ENCODE measurements at regions of chr10 and their contacts with region 1.

Region 1: GRCh38 chr10:95693668-95694534 is at the start of gene TCTN3:
- DNase-seq: peak; percentile 99
- H3K4me3 ChIP-seq: peak within 1 kb of the TSS; percentile 97
- H3K27ac ChIP-seq: peak within 1 kb of the TSS; percentile 72
- H3K27me3 ChIP-seq: no peaks in the 10 kb centered on the region
- CTCF ChIP-seq: peak; percentile 99
- polyA plus RNA-seq, gene TCTN3: 51.3 and 55.3 TPM in 2 replicates

Region 2: DNA sequence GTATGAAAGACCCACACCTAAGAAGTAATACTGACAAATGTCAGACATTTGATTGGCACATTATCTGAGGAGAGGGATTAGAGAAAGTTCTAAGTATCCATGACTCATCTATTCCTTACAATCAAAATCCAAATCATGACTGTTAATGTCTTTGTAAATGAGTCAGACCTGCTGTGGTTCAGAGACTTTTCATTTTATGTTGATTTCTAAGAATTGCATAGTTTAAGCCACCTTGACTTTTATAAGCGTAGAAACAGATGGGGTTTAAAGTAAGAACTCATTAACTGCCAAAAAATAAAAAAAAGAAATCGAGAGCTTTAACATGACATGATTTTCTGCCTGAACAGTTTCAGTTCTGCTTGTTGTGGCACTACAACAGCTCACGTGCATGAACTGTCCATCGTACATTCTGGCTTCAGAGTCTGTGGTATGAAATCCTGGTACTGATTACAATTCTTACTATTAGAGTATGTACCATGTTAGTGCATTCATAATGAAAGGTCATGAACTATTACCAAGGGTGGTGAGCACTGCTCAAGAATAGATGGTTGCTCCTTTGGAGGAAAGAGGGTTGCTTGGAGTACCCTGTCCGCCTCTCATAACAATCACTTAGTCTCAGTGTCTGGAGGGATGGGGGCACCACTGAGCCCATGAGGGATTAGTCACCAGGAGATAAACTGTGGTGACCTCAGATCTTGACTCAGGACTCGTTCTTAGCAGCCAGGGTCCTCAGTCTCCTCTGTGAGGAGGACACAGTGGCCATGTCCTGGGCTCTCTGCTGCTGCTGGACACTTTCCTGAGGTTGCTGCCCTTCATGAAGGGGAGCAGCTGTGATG is 457.6 kb before region 1 on chr10:
- CTCF ChIA-PET with region 1: no interaction called
- POLR2A ChIA-PET with region 1: no interaction called
- DNase-seq: no peak
- H3K4me3 ChIP-seq: no peak overlapping the region
- H3K27ac ChIP-seq: peak overlapping the region; percentile 77
- H3K27me3 ChIP-seq: no peaks in the 10 kb centered on the region
- CTCF ChIP-seq: no peak

Region 3: GRCh38 chr10:95656291-95657164 is 37.4 kb before region 1 on chr10 and contains the start of gene ALDH18A1:
- CTCF ChIA-PET with region 1: interaction called, 32 read pairs
- POLR2A ChIA-PET with region 1: interaction called, 5 read pairs
- DNase-seq: peak; percentile 82
- H3K4me3 ChIP-seq: peak within 1 kb of the TSS; percentile 95
- H3K27ac ChIP-seq: peak within 1 kb of the TSS; percentile 39
- H3K27me3 ChIP-seq: no peaks in the 10 kb centered on the region
- CTCF ChIP-seq: no peak
- polyA plus RNA-seq, gene ALDH18A1: 123 and 125 TPM in 2 replicates

Region 4: DNA sequence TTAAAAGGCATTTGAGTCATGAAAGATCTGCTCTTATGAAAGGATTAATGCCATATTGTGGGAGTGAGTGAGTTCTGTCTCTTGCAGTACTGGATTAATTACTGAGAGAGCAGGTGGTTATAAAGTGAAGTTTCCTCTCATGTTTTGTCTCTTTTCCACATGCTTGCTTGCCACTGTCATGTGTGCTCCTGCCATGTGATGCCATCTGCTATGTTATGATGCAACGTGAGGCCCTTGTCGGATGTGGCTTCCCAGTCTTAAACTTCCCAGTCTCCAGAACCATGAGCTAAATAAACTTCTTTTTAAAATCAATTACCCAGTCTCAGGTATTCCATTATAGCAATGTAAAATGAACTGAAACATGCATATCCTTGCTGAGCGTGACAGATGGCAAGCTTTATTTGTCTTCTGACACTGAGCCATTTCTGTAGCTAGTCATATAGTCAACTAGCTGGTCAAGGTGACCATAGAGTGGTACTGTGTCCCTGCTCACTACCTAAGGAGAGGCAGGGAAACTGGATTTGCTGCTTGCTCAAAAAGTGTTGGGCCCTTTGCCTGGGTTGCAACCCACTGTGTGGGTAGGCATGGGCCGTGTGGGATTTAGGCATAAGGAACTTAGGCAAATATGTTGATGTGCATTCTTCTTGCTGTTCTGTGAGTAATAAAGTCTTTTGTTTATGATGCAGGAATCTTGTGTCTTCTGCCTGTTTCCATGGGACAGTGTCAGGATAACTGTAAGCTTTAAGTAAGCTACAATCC is 22.7 kb after region 1 on chr10:
- CTCF ChIA-PET with region 1: interaction called, 46 read pairs
- POLR2A ChIA-PET with region 1: no interaction called
- DNase-seq: no peak
- H3K4me3 ChIP-seq: no peak overlapping the region
- H3K27ac ChIP-seq: no peak overlapping the region
- H3K27me3 ChIP-seq: no peaks in the 10 kb centered on the region
- CTCF ChIP-seq: no peak

Region 5: GRCh38 chr10:95783741-95784140 is 89.8 kb after region 1 on chr10:
- CTCF ChIA-PET with region 1: interaction called, 18 read pairs
- POLR2A ChIA-PET with region 1: no interaction called
- DNase-seq: no peak
- H3K4me3 ChIP-seq: no peak overlapping the region
- H3K27ac ChIP-seq: no peak overlapping the region
- H3K27me3 ChIP-seq: no peaks in the 10 kb centered on the region
- CTCF ChIP-seq: no peak

Region 6: GRCh38 chr10:95864906-95865813 is 171.3 kb after region 1 on chr10:
- CTCF ChIA-PET with region 1: interaction called, 238 read pairs
- POLR2A ChIA-PET with region 1: interaction called, 7 read pairs
- DNase-seq: peak; percentile 63
- H3K4me3 ChIP-seq: no peak overlapping the region
- H3K27ac ChIP-seq: peak overlapping the region; percentile 0
- H3K27me3 ChIP-seq: no peaks in the 10 kb centered on the region
- CTCF ChIP-seq: peak; percentile 87

Region 7: GRCh38 chr10:95907456-95908253 is 213.8 kb after region 1 on chr10 and contains the start of gene CC2D2B:
- CTCF ChIA-PET with region 1: interaction called, 48 read pairs
- POLR2A ChIA-PET with region 1: no interaction called
- DNase-seq: peak; percentile 46
- H3K4me3 ChIP-seq: peak within 1 kb of the TSS; percentile 82
- H3K27ac ChIP-seq: peak within 1 kb of the TSS; percentile 69
- H3K27me3 ChIP-seq: peaks cover 3% of the 10 kb centered on the region
- CTCF ChIP-seq: peak; percentile 22; the same call in 1 of the 2 replicates
- polyA plus RNA-seq, gene CC2D2B: not detected in 2 replicates

Region 8: DNA sequence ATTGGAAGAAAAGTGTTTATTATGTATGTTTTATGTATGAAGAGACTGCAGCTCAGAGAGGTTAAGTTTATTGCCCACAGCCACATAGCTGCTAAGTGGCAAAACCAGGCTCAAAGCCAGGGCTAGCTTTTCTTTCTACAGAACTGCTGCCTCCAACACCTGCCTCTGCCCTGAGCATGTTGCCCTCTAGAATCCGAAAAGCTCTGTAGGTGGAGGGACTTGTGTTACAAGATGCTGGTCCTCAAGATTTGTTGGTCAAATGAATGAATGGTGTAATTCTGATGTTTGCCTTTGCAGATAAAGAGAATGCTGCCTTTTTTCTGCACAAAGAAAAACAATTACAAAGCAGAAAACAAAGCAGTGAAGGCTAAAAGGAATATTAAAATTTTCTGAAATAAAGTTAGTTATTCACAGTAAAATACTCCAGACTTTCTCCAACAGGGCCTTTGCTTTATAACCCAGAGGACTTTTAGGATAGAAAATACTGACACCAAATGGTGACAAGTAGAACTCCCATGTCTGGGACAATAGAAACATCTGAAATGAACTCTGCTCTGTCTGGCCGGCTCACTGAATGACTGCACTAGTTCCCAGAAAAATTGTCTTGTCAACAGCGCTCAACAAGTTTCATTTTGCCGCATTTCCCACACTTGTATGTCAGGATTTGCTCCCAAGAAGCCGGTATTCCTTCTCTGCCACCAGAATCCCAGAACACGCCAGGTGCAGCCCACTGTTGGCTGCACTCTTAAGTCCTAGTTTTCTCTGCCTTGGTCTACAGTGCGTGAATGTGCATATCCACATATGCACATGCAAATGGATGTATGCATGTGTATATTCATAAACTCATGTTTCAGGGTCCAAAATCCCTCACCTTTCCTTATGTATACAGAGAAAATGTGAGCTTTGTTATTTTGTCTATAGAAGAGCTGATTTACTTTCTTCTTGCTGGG is 599.3 kb after region 1 on chr10:
- CTCF ChIA-PET with region 1: interaction called, 13 read pairs
- POLR2A ChIA-PET with region 1: no interaction called
- DNase-seq: peak; percentile 1
- H3K4me3 ChIP-seq: no peak overlapping the region
- H3K27ac ChIP-seq: no peak overlapping the region
- H3K27me3 ChIP-seq: peaks cover 3% of the 10 kb centered on the region
- CTCF ChIP-seq: peak; percentile 54